Right ventricle myocardium superior (tissue), 1 donor: ENCODE measurements at regions of chr12 and their contacts with region 1.

Region 1: GRCh38 chr12:123094349-123095074 is 56.4 kb downstream of the PITPNM2 start:
- DNase-seq: peak; percentile 66
- ATAC-seq: peak; percentile 16

Region 2: GRCh38 chr12:122984612-122985337 is 109.7 kb before region 1 on chr12:
- intact Hi-C with region 1: no loop called
- DNase-seq: peak; percentile 74
- ATAC-seq: peak; percentile 20

Region 3: DNA sequence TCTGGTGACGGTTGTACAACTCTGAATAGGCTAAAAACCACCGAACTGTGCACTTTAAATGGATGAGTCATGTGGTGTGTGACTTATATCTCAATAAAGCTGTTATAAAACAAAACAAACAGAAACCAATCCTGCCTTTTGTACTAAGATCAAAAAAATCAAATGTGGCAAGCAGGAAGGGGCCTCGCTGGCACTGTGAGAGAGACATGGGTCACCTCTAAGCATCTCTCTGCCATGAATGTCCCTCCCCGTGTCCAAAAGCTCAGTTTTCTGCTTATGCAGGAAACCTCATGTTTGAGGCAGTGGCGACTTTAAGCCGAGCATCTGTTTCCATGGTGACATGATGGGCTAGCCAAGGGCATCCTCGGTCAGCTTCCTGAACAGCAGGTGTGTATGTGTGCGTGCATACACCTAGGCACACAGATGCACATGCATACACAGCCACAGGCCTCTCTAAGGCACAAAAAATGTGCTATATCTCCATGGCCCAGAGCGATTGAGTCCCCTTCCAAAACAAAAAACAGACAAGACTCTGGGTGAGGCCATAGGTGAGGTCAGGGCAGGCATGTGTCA is 69.6 kb before region 1 on chr12:
- intact Hi-C with region 1: no loop called
- DNase-seq: no peak
- ATAC-seq: no peak

Region 4: DNA sequence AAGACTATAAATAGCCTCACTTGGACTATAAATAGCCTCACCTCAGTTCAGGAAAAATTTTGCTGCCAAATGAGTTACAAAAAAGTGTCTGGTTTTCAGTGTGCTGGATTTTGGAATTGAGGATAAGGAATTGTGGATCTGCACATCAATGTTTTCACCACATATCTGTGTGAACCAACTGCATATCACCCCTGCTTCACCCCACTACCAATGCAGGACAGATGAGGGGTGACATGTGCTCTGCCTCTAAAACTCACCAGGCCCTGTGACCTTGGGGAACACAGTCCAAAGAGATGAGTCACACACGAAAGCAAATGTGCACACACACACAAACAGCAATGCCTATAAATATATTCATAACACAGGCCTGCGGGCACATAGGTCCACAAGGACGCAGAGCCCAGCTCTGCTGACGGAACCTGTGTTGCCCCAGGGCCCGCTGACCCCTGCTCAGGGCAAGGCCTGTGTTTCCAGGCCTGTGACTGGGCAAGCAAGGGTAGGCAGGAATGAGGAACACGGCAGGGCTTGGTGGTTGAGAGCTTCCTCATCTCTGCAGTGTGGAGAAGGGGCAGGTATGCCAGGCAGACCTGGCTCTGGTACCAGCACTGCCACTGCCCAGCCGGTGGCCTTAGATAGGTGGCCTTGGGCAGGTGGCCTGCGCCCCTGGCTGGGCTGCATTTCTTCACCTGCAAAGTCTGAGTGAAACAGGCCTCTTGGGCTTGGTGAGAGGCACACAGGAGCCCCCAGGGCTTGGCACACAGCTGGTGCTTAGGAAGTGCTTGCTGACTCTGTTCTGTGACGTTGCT is 31.6 kb before region 1 on chr12:
- intact Hi-C with region 1: loop called (anchors 5 kb)
- DNase-seq: peak; percentile 60
- ATAC-seq: peak; percentile 69

Region 5: DNA sequence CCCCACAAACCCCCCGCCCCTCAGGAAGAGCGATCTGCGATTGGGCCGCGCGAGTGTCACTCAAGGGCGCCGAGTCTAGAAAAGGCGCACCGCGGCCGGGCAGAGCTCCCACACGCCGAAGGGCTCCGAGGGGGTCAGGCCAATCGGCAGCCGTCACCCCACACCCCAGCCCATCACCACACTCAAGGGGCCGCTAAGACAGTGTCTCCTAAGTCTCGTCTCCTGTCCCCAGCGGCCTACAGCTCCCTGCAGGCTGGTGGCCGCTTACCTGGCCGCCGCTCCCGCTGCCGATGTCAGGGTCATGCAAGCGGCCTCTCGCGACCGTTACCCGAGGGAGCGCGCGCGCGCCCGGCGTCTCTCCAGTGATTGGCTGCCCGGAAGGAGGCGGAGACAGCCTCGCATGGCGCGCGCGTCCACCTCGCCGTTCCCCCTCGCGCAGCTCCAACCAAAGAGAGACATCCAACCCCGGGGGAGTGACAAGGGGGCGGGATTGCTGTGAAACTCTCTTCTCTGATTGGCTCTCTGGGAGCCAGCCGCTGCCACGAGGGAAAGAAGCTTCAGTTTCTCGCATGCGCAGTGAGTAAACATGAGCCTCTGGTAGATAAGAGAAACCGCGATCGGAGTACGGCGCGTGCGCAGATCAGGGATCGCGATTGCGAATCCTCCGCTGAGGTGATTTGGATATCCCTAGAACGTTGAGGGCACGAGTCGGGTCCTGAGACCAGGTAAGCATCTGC is 138.5 kb after region 1 on chr12 and contains the starts of genes MPHOSPH9 and MTRFR:
- intact Hi-C with region 1: no loop called
- DNase-seq: peak; percentile 99
- ATAC-seq: peak; percentile 98
- total RNA-seq, gene MPHOSPH9: 20.8 TPM
- total RNA-seq, gene MTRFR: 8.1 TPM

Region 6: DNA sequence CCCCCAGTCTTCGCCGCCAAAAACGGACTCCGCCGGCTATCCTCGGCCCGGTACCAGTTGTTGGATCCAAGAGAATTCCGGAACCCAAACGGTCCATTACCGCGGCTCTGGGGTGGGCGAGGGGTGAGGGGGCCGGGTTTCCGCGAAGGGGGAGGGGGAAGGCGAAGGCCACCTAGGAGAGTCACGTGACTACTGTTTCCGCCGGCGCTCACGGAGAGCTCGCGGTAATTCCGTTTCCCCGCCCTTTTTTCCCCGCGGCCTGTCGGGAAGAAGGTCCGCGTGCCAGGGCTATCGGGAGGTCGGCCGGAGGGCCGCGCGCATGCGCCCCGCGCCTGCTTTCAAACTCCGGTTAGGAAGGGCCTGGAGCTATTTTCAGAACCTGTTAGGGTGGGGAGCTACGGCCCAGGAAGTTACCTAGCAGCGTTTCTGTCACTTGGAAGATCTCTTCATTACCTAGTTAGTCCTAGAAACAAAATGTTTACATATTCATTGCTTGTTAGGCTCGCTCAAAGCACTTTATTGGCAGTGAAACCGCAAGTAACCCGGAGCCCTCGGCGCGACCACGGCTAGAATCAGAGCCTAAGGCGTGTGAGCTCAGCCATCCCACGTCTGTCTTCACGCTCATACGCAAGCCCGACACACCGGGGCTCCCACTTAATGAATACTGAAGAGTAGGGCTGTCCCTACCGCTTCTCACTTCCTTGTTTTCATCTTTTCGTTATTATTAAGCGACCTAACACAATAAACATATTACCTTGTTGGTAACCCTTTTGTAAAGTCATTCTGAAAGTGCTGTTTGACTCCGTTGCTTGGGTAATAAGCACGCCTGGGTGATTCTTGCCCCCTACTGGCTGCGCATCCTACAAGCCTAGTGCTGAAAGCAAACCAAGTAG is 270.8 kb after region 1 on chr12:
- intact Hi-C with region 1: no loop called
- DNase-seq: peak; percentile 99
- ATAC-seq: peak; percentile 96